HCT116 (cell line): ENCODE measurements at regions of chr20 and their contacts with region 1.

Region 1: GRCh38 chr20:50561379-50562078 is 51.3 kb downstream of the PTPN1 start:
- DNase-seq: peak; percentile 95
- ATAC-seq: peak; percentile 83
- H3K4me3 ChIP-seq: peak overlapping the region in 1 of 2 experiments; percentile 25; a peak in 2 of 4 replicates
- H3K27ac ChIP-seq: peak overlapping the region; percentile 94
- H3K4me1 ChIP-seq: peaks cover 62 to 80% of the 10 kb centered on the region in 2 experiments
- H3K27me3 ChIP-seq: no peaks in the 10 kb centered on the region
- CTCF ChIP-seq: no peak
- POLR2A ChIP-seq: no peak
- RAD21 ChIP-seq: 0 out of 2 replicates have a peak, but pooled peaks have one; percentile 3

Region 2: DNA sequence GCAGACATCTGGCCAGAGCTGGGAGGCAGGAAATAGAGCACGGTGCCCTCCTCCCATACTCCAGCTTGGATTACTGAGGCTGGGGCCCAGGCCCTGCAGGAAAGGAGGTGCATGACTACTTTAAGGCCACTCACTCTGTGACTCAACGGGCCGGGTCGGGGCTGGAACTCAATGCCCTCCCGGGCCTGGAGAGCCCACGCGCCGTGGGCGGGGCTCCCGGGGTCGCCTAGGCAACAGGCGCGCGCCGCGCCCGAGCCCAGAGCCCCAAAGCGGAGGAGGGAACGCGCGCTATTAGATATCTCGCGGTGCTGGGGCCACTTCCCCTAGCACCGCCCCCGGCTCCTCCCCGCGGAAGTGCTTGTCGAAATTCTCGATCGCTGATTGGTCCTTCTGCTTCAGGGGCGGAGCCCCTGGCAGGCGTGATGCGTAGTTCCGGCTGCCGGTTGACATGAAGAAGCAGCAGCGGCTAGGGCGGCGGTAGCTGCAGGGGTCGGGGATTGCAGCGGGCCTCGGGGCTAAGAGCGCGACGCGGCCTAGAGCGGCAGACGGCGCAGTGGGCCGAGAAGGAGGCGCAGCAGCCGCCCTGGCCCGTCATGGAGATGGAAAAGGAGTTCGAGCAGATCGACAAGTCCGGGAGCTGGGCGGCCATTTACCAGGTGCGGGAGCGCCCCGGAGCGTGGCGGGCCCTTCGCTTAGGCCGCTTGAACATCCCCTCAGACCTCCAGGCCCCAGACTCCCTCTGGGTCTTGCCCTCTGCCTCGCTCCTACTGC is 51.4 kb before region 1 on chr20 and contains the start of gene PTPN1:
- CTCF ChIA-PET with region 1: interaction called, 3 read pairs
- POLR2A ChIA-PET with region 1: no interaction called
- RAD21 ChIA-PET with region 1: no interaction called
- intact Hi-C with region 1: loop called (anchors 5 kb)
- DNase-seq: peak; percentile 98
- ATAC-seq: peak; percentile 96
- H3K4me3 ChIP-seq: peak within 1 kb of the TSS; percentile 88 to 95
- H3K27ac ChIP-seq: peak within 1 kb of the TSS; percentile 54
- H3K4me1 ChIP-seq: peaks cover 19 to 58% of the 10 kb centered on the region in 2 experiments
- H3K27me3 ChIP-seq: no peaks in the 10 kb centered on the region
- CTCF ChIP-seq: no peak
- POLR2A ChIP-seq: peak; percentile 85
- RAD21 ChIP-seq: no peak; the same call in 1 of the 2 replicates
- total RNA-seq, gene PTPN1: 47.5 TPM

Region 3: DNA sequence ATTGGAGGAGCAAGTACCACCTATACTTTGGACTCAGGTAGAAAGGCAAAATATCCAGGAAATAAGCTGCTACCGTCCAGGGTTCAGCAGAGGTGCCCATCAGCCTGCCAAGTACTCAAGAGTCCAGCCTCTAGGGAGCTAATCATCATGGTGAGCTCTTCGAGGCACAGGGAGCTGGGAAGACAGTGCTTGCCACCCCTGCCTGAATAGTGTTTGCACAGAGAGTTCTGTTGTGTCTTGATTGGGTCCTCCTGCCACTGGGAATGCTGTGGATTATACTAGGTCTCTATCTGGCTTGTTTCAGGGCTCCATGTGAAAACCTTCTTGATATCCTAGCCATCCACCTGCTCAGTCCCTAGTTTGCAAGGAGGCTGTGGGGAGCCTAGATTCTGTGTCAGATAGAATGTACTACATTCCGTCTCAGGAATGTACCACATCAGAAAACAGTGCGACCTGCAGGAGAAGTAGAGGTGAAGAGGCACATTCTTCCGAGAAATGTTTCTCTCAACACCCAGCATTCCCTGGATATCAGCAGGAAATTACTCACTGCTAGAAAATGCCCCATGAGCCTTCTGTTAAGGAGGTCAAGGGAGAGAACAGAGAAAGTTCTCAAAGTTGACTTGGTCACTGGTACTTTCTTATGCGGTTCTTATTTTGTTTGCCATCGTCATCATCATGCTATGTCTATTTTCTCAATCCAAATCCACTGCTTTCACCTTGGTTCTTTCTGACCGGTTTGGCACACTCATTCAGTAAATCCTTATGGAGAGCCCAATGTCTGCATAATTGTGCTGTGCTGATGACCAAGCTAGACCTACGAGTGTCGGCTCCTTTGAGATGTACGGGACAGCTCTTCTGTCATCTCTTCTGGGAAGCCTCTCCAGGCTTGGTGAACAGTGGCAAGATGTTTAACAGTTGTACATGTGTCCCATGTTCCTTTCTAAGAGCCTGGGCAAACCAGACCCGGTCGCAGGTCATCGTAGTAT is 20.6 kb before region 1 on chr20:
- CTCF ChIA-PET with region 1: interaction called, 3 read pairs
- POLR2A ChIA-PET with region 1: interaction called, 6 read pairs
- RAD21 ChIA-PET with region 1: no interaction called
- intact Hi-C with region 1: loop called (anchors 2 kb)
- DNase-seq: peak; percentile 91
- ATAC-seq: peak; percentile 88
- H3K4me3 ChIP-seq: peak overlapping the region; percentile 13 to 45
- H3K27ac ChIP-seq: peak overlapping the region; percentile 93
- H3K4me1 ChIP-seq: peaks cover 86 to 98% of the 10 kb centered on the region in 2 experiments
- H3K27me3 ChIP-seq: no peaks in the 10 kb centered on the region
- CTCF ChIP-seq: peak; percentile 5 to 17 (median 14); a peak in 1 of 6 replicates
- POLR2A ChIP-seq: no peak
- RAD21 ChIP-seq: 0 out of 2 replicates have a peak, but pooled peaks have one; percentile 21

Region 4: DNA sequence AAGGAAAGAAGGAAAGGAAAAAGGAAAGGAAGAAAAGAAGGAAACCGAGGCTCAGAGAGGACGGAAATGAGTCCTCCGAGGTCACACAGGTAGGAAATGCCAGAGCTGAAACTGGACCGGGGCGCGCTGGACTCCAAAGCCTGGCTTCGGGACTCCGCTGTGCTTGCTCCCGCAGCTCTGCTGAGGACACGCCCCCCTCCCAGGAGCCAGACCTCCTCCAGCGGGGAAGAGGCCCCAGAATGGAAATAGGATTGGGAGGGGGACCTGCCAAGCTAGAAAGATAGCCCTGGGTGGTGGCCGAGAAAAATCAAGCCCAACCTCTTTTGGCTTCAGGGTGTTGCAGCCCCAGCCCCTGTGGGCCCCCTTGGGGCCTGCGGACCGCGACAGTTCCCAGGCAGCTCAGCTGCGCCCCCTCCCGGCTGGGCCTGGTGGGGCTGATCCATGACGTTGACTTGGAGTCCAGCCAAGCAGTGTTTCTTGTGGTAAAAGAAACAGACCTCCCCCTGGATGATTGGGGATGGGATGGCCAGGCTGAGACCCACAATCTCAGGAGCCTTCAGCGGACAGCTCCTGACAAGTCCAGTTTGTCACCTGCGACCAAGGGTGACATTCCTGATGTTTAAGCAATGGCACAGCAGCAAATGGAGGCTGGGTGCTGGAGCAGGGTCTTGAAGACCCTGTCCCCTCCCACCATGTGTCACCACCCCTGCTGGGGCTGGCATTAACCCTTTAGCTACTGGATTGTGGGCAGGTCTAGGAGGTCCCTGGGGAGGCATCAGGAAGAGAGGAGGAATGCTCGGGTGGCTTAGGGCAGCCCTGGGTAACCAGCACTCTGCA is 74.4 kb after region 1 on chr20:
- CTCF ChIA-PET with region 1: no interaction called
- POLR2A ChIA-PET with region 1: no interaction called
- RAD21 ChIA-PET with region 1: no interaction called
- intact Hi-C with region 1: no loop called
- DNase-seq: peak; percentile 67
- ATAC-seq: peak; percentile 87
- H3K4me3 ChIP-seq: peak overlapping the region; percentile 44 to 56
- H3K27ac ChIP-seq: peak overlapping the region; percentile 11; the same call in 1 of the 2 replicates
- H3K4me1 ChIP-seq: peaks cover 13 to 30% of the 10 kb centered on the region in 2 experiments
- H3K27me3 ChIP-seq: no peaks in the 10 kb centered on the region
- CTCF ChIP-seq: peak; percentile 75 to 99 (median 99); a peak in 5 of 6 replicates
- POLR2A ChIP-seq: no peak
- RAD21 ChIP-seq: peak; percentile 64